ENCODE measurements at regions of chr18 and their contacts with region 1.

Region 1: GRCh38 chr18:70355620-70356385 is 67.0 kb downstream of the SOCS6 start:
- DNase-seq: no peak
- H3K4me3 ChIP-seq: no peak overlapping the region
- H3K27ac ChIP-seq: no peak overlapping the region
- H3K4me1 ChIP-seq: peaks cover 9% of the 10 kb centered on the region
- H3K27me3 ChIP-seq: no peaks in the 10 kb centered on the region
- CTCF ChIP-seq: no peak
- POLR2A ChIP-seq: no peak

Region 2: DNA sequence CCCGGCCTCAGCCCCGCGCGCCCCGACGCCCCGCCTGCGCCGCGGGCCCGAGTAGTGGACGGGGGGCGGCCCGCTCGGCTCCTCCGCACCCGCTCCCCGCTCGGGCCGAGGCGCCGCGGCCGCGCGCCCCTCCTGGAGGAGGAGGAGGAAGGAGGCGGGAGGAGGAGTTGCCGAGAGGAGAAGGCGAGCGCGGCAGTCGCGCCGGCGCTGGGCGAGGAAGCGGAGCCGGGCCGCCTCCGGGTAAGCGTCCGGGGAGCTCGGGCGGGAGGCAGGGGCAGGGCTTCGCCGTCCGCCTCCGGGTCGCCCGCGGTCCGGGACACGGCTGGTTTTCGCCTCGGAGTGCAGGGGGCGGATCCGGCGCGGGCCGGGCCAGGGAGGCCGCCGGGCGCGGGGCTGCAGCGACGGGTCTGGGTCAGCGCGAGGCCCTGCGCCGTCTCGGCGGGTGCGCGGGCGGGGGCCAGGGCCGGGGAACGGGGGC is 66.9 kb before region 1 on chr18 and contains the start of gene SOCS6:
- CTCF ChIA-PET with region 1: no interaction called
- POLR2A ChIA-PET with region 1: no interaction called
- dilution Hi-C with region 1: no loop called
- intact Hi-C with region 1: loop called (anchors 5 kb)
- DNase-seq: peak; percentile 60
- H3K4me3 ChIP-seq: peak within 1 kb of the TSS; percentile 79 to 98 (median 90)
- H3K27ac ChIP-seq: peak within 1 kb of the TSS; percentile 73
- H3K4me1 ChIP-seq: peaks cover 22% of the 10 kb centered on the region
- H3K27me3 ChIP-seq: no peaks in the 10 kb centered on the region
- CTCF ChIP-seq: no peak
- POLR2A ChIP-seq: peak; percentile 75
- total RNA-seq, gene SOCS6: 13.2 and 15.0 TPM in 2 replicates